Caco-2 (cell line): ENCODE measurements at regions of chr12 and their contacts with region 1.

Region 1: GRCh38 chr12:389139-390096 is at the start of gene KDM5A:
- DNase-seq: peak; percentile 94 to 95
- H3K4me3 ChIP-seq: peak within 1 kb of the TSS; percentile 72
- H3K4me3 Mint-ChIP-seq: peak within 1 kb of the TSS; percentile 87
- H3K27ac Mint-ChIP-seq: peak within 1 kb of the TSS; percentile 94
- H3K4me1 ChIP-seq: peaks cover 11% of the 10 kb centered on the region
- H3K4me1 Mint-ChIP-seq: peaks cover 7% of the 10 kb centered on the region
- H3K27me3 ChIP-seq: no peaks in the 10 kb centered on the region
- H3K27me3 Mint-ChIP-seq: no peaks in the 10 kb centered on the region
- CTCF ChIP-seq: no peak
- total RNA-seq, gene KDM5A: 72.7 and 89.6 TPM in 2 replicates

Region 2: GRCh38 chr12:401235-402028 is 12.0 kb after region 1 on chr12 and contains the start of gene CCDC77:
- CTCF ChIA-PET with region 1: interaction called, 7 read pairs
- POLR2A ChIA-PET with region 1: interaction called, 47 read pairs
- intact Hi-C with region 1: loop called (anchors 1 kb)
- DNase-seq: peak; percentile 93 to 98
- H3K4me3 ChIP-seq: peak within 1 kb of the TSS; percentile 62
- H3K4me3 Mint-ChIP-seq: no peak within 1 kb of the TSS
- H3K27ac Mint-ChIP-seq: no peak within 1 kb of the TSS
- H3K4me1 ChIP-seq: peaks cover 9% of the 10 kb centered on the region
- H3K4me1 Mint-ChIP-seq: no peaks in the 10 kb centered on the region
- H3K27me3 ChIP-seq: no peaks in the 10 kb centered on the region
- H3K27me3 Mint-ChIP-seq: no peaks in the 10 kb centered on the region
- CTCF ChIP-seq: peak in 1 of 2 experiments; percentile 46
- total RNA-seq, gene CCDC77: 33.0 and 33.9 TPM in 2 replicates